ENCODE measurements at regions of chr12 and their contacts with region 1.

Region 1: GRCh38 chr12:117587631-117588287 is 226.3 kb upstream of the NOS1 start:
- DNase-seq: peak; percentile 59
- ATAC-seq: no peak
- H3K4me3 Mint-ChIP-seq: no peak overlapping the region
- H3K27ac Mint-ChIP-seq: no peak overlapping the region
- H3K4me1 Mint-ChIP-seq: no peaks in the 10 kb centered on the region
- H3K27me3 Mint-ChIP-seq: peaks cover 12% of the 10 kb centered on the region
- CTCF ChIP-seq: peak; percentile 74

Region 2: DNA sequence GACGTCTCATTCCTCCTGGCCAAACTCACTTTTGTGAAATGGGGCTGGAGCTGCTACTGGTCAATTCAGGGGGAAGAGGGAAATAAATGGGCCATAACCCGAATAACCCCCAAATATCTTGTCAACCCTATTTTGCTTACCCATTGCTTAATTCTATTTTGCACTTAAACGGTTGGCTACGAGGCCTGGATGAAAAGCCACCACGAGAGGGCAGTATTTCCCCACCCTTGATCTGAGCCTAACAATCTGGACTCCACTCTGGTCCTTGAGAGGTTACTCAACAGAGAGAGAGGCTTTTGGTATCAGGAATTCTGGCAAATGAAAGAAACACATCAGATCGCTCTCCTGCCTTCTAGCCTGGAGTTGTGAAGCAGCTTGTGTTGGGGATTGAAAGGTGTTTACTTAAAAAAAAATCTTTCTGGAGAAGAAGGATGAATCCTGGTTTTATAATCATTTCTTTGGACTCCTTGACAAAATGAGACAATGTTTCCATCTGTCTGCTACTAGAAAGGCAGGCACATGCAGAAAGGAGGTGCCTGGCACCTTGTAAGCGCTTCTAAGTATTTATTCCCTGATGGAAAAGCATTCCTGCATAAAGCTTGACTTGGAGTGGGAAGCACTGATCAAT is 375.1 kb before region 1 on chr12:
- CTCF ChIA-PET with region 1: interaction called, 8 read pairs
- POLR2A ChIA-PET with region 1: no interaction called
- intact Hi-C with region 1: loop called (anchors 5 kb)
- DNase-seq: peak; percentile 83
- ATAC-seq: peak; percentile 42
- H3K4me3 Mint-ChIP-seq: no peak overlapping the region
- H3K27ac Mint-ChIP-seq: no peak overlapping the region
- H3K4me1 Mint-ChIP-seq: no peaks in the 10 kb centered on the region
- H3K27me3 Mint-ChIP-seq: peaks cover 9% of the 10 kb centered on the region
- CTCF ChIP-seq: peak; percentile 79

Region 3: GRCh38 chr12:117236456-117237001 is 351.2 kb before region 1 on chr12:
- CTCF ChIA-PET with region 1: interaction called, 15 read pairs
- POLR2A ChIA-PET with region 1: no interaction called
- intact Hi-C with region 1: loop called (anchors 2 kb)
- DNase-seq: peak; percentile 93
- ATAC-seq: peak; percentile 60
- H3K4me3 Mint-ChIP-seq: no peak overlapping the region
- H3K27ac Mint-ChIP-seq: no peak overlapping the region
- H3K4me1 Mint-ChIP-seq: no peaks in the 10 kb centered on the region
- H3K27me3 Mint-ChIP-seq: peaks cover 4% of the 10 kb centered on the region
- CTCF ChIP-seq: peak; percentile 89

Region 4: GRCh38 chr12:117367011-117367638 is 220.6 kb before region 1 on chr12:
- CTCF ChIA-PET with region 1: interaction called, 36 read pairs
- POLR2A ChIA-PET with region 1: no interaction called
- intact Hi-C with region 1: loop called (anchors 5 kb)
- DNase-seq: peak; percentile 72
- ATAC-seq: no peak
- H3K4me3 Mint-ChIP-seq: no peak overlapping the region
- H3K27ac Mint-ChIP-seq: no peak overlapping the region
- H3K4me1 Mint-ChIP-seq: no peaks in the 10 kb centered on the region
- H3K27me3 Mint-ChIP-seq: peaks cover 26% of the 10 kb centered on the region
- CTCF ChIP-seq: peak; percentile 80

Region 5: GRCh38 chr12:117574655-117575054 is 13.1 kb before region 1 on chr12:
- CTCF ChIA-PET with region 1: interaction called, 21 read pairs
- POLR2A ChIA-PET with region 1: no interaction called
- intact Hi-C with region 1: no loop called
- DNase-seq: no peak
- ATAC-seq: no peak
- H3K4me3 Mint-ChIP-seq: no peak overlapping the region
- H3K27ac Mint-ChIP-seq: no peak overlapping the region
- H3K4me1 Mint-ChIP-seq: no peaks in the 10 kb centered on the region
- H3K27me3 Mint-ChIP-seq: no peaks in the 10 kb centered on the region
- CTCF ChIP-seq: no peak